ENCODE measurements at regions of chr10 and their contacts with region 1.

Region 1: DNA sequence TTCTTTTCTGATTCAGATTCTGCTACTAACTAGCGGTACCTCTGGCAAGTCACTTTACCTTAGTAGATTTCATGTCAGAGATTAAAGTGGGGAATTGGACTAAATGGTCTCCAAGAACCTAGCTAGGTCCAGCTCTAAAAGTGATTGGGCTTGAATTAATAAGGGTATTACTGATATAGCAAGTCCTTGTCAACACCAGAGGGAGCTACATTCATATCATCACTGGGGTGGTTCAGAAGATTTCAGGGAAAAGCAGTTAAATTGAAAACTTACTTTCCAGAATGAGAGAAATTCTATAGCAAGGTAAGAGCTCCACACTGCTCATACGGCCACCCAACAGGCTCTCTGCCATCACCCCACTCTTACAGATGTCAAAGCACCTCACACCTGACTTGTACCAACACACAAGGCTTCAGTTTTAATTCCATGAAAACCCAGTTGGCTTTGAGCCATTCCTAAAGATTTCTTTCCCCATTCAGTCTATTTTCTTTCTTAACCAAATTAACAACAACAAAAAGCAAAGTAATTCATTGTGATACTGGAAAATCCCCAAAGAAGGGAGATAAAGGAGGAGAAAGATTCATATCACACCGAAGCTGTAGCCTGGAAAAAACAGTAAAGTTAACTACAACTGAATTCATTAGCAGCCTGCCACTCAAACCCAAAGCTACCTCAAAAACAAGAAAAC is 38.0 kb upstream of the SPOCK2 start:
- DNase-seq: peak; percentile 40
- ATAC-seq: peak; percentile 78
- H3K4me3 ChIP-seq: no peak overlapping the region
- H3K27ac ChIP-seq: no peak overlapping the region
- H3K4me1 ChIP-seq: no peaks in the 10 kb centered on the region
- H3K27me3 ChIP-seq: no peaks in the 10 kb centered on the region
- CTCF ChIP-seq: peak; percentile 51 to 78 (median 62)
- POLR2A ChIP-seq: no peak
- RAD21 ChIP-seq: peak; percentile 85

Region 2: GRCh38 chr10:72114706-72115450 is 11.4 kb before region 1 on chr10:
- CTCF ChIA-PET with region 1: interaction called, 11 read pairs
- POLR2A ChIA-PET with region 1: interaction called, 3 read pairs
- RAD21 ChIA-PET with region 1: no interaction called
- intact Hi-C with region 1: no loop called
- DNase-seq: no peak
- ATAC-seq: no peak
- H3K4me3 ChIP-seq: no peak overlapping the region
- H3K27ac ChIP-seq: no peak overlapping the region
- H3K4me1 ChIP-seq: peaks cover 0 to 1% of the 10 kb centered on the region in 2 experiments; a peak in 1 of 4 replicates
- H3K27me3 ChIP-seq: no peaks in the 10 kb centered on the region
- CTCF ChIP-seq: no peak
- POLR2A ChIP-seq: no peak
- RAD21 ChIP-seq: no peak

Region 3: GRCh38 chr10:72140174-72140573 is 13.8 kb after region 1 on chr10:
- CTCF ChIA-PET with region 1: interaction called, 18 read pairs
- POLR2A ChIA-PET with region 1: interaction called, 4 read pairs
- RAD21 ChIA-PET with region 1: no interaction called
- intact Hi-C with region 1: no loop called
- DNase-seq: no peak
- ATAC-seq: no peak
- H3K4me3 ChIP-seq: no peak overlapping the region
- H3K27ac ChIP-seq: no peak overlapping the region
- H3K4me1 ChIP-seq: no peaks in the 10 kb centered on the region; a peak in 2 of 4 replicates
- H3K27me3 ChIP-seq: no peaks in the 10 kb centered on the region
- CTCF ChIP-seq: no peak
- POLR2A ChIP-seq: no peak
- RAD21 ChIP-seq: no peak

Region 4: GRCh38 chr10:72215652-72216549 is 89.6 kb after region 1 on chr10 and contains the starts of genes ANAPC16 and ASCC1:
- CTCF ChIA-PET with region 1: interaction called, 31 read pairs
- POLR2A ChIA-PET with region 1: no interaction called
- RAD21 ChIA-PET with region 1: interaction called in 1 of 2 experiments, 3 read pairs
- intact Hi-C with region 1: no loop called
- DNase-seq: peak; percentile 84
- ATAC-seq: peak; percentile 95
- H3K4me3 ChIP-seq: peak within 1 kb of the TSS; percentile 72 to 85
- H3K27ac ChIP-seq: peak within 1 kb of the TSS; percentile 99
- H3K4me1 ChIP-seq: peaks cover 18 to 23% of the 10 kb centered on the region in 2 experiments
- H3K27me3 ChIP-seq: no peaks in the 10 kb centered on the region
- CTCF ChIP-seq: no peak
- POLR2A ChIP-seq: peak; percentile 94
- RAD21 ChIP-seq: peak; percentile 11; the same call in 1 of the 2 replicates
- total RNA-seq, gene ANAPC16: 71.1 TPM
- total RNA-seq, gene ASCC1: 34.5 TPM

Region 5: DNA sequence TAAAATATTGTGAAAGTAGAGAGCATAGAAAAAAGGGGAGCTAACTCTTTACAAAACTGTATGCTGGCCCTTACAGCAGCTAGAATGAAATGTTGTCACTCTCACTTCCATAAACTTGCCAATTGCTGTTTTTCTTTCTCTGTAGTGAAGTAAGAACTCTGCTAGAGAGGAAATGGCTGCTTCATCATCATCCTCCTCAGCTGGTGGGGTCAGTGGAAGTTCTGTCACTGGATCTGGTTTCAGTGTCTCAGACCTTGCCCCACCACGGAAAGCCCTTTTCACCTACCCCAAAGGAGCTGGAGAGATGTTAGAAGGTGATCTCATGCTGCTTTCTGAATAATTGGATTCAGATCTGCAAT is 97.4 kb after region 1 on chr10:
- CTCF ChIA-PET with region 1: interaction called, 31 read pairs
- POLR2A ChIA-PET with region 1: interaction called, 3 read pairs
- RAD21 ChIA-PET with region 1: interaction called, 3 to 9 read pairs
- intact Hi-C with region 1: loop called (anchors 2 kb)
- DNase-seq: no peak
- ATAC-seq: no peak
- H3K4me3 ChIP-seq: no peak overlapping the region
- H3K27ac ChIP-seq: no peak overlapping the region
- H3K4me1 ChIP-seq: peaks cover 0 to 3% of the 10 kb centered on the region in 2 experiments; a peak in 2 of 4 replicates
- H3K27me3 ChIP-seq: no peaks in the 10 kb centered on the region
- CTCF ChIP-seq: no peak
- POLR2A ChIP-seq: no peak
- RAD21 ChIP-seq: no peak

Region 6: DNA sequence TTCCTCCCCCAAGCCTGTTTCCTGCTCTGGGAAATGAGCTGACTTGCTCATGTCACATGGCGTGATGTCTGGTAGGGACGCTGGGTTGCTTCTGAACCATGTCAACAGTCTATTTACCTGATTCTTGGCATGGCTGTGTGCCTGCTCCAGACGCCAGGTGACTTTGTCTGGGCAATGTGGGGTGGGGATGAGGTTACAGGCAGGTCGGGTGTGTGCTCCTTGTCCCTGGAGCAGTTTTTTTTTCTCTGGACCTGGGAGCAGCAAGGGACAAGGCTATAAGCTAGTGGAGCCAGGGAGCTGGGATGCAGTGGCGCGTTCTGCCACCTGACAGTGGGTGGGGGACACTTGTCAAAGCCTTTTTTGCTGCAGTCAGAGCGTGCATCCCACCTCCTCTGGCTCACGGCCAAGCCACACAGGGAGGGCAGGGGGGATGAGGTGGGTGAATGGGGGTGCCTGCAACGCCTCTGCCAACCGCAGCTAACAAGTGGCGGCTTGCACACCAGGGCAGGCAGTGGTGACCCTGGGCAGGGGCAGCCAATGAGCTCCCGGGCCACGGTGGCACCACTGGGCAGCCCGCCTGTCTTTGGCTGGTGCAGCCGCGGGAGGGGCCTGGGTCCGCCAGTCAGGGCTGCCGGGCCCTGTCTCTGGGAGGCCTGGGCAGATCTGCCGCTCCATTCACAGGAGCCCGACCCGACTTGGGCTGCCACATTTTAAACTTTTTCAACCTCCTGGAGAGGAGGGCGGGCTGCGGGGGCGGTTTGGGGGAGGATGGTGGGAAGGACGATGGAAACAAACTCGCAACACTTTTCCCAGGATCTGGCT is 205.5 kb after region 1 on chr10:
- CTCF ChIA-PET with region 1: no interaction called
- POLR2A ChIA-PET with region 1: interaction called, 4 read pairs
- RAD21 ChIA-PET with region 1: interaction called in 1 of 2 experiments, 3 read pairs
- intact Hi-C with region 1: loop called (anchors 1 kb)
- DNase-seq: peak; percentile 80
- ATAC-seq: peak; percentile 92
- H3K4me3 ChIP-seq: peak overlapping the region; percentile 22 to 28
- H3K27ac ChIP-seq: peak overlapping the region; percentile 92
- H3K4me1 ChIP-seq: peaks cover 50 to 63% of the 10 kb centered on the region in 2 experiments
- H3K27me3 ChIP-seq: no peaks in the 10 kb centered on the region
- CTCF ChIP-seq: peak in 2 of 3 experiments; percentile 38 to 50; a peak in 3 of 6 replicates
- POLR2A ChIP-seq: peak; percentile 36
- RAD21 ChIP-seq: no peak

Region 7: DNA sequence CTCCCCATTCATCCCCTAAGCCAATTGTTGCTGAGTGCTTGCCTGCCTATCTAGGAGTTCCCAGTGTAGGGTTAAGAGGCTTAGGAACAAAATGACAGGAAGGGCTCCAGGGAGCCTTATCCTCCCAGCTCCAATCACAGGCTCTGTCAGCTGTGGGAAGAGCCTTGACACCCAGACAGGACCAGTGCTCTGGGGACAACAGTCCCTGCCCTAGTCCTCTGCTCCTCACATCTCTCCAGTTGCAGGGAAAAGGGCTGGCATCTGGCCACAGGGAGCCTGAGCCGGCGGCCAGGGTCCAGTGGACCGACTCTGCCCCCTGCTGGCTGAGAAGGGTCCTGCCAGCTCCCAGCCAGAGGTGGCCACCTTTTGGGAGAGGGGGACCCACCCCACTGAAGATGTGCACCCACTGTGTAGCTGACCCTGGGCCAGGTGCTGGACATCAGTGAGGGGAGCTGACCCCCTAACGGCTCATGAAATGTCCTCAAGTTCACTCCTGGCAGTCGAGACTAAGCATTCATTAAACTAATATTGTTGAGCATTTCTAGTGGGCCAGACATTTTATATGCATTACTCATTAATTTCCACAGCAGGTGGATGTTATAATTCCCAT is 210.8 kb after region 1 on chr10:
- CTCF ChIA-PET with region 1: interaction called, 11 read pairs
- POLR2A ChIA-PET with region 1: interaction called, 4 read pairs
- RAD21 ChIA-PET with region 1: interaction called, 3 to 4 read pairs
- intact Hi-C with region 1: loop called (anchors 1 kb)
- DNase-seq: no peak
- ATAC-seq: peak; percentile 72
- H3K4me3 ChIP-seq: no peak overlapping the region
- H3K27ac ChIP-seq: peak overlapping the region; percentile 35; the same call in 1 of the 2 replicates
- H3K4me1 ChIP-seq: peaks cover 13 to 24% of the 10 kb centered on the region in 2 experiments
- H3K27me3 ChIP-seq: no peaks in the 10 kb centered on the region
- CTCF ChIP-seq: peak in 2 of 3 experiments; percentile 96 to 98; a peak in 4 of 6 replicates
- POLR2A ChIP-seq: no peak
- RAD21 ChIP-seq: no peak